Endothelial cell of umbilical vein (primary cell): ENCODE measurements at regions of chr1 and their contacts with region 1.

Region 1: GRCh38 chr1:50929376-50929958 is 30.6 kb downstream of the FAF1 start:
- DNase-seq: peak; percentile 52
- H3K4me3 ChIP-seq: no peak overlapping the region
- H3K27ac ChIP-seq: no peak overlapping the region
- H3K4me1 ChIP-seq: no peaks in the 10 kb centered on the region
- H3K27me3 ChIP-seq: no peaks in the 10 kb centered on the region
- CTCF ChIP-seq: peak; percentile 23 to 36
- POLR2A ChIP-seq: no peak

Region 2: DNA sequence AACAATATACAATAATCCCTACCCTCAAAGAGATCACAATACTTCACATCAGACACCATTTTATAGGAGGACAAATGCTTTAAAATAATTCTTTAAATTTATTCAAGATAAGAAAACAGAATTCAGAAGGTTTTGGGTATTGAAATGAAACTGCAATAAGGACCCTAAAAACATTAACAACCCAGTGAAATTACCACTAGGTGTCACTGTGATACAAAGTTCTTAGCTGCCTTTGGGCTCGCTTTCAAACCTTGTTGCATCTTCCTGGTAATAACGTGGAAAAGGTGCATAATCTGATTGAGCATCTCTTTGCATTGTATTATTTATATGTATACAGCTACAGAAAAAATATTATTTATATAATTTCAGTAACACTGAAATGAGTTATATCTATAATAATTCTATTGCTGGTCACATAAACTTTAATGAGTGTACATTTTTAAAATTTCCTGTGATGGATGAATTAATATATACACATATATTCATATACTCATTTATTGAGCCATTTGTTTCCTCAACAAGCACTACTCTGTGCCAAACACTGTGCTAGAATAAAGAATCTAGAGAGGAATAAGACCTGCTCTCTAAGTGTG is 154.6 kb before region 1 on chr1:
- CTCF ChIA-PET with region 1: interaction called, 61 read pairs
- POLR2A ChIA-PET with region 1: no interaction called
- dilution Hi-C with region 1: no loop called
- intact Hi-C with region 1: loop called (anchors 1 kb)
- DNase-seq: peak; percentile 67
- H3K4me3 ChIP-seq: no peak overlapping the region
- H3K27ac ChIP-seq: no peak overlapping the region
- H3K4me1 ChIP-seq: no peaks in the 10 kb centered on the region
- H3K27me3 ChIP-seq: no peaks in the 10 kb centered on the region
- CTCF ChIP-seq: peak; percentile 38 to 50
- POLR2A ChIP-seq: no peak

Region 3: GRCh38 chr1:50917138-50918137 is 12.0 kb before region 1 on chr1:
- CTCF ChIA-PET with region 1: interaction called, 20 read pairs
- POLR2A ChIA-PET with region 1: no interaction called
- dilution Hi-C with region 1: no loop called
- intact Hi-C with region 1: no loop called
- DNase-seq: no peak
- H3K4me3 ChIP-seq: no peak overlapping the region
- H3K27ac ChIP-seq: no peak overlapping the region
- H3K4me1 ChIP-seq: no peaks in the 10 kb centered on the region
- H3K27me3 ChIP-seq: no peaks in the 10 kb centered on the region
- CTCF ChIP-seq: no peak
- POLR2A ChIP-seq: no peak

Region 4: DNA sequence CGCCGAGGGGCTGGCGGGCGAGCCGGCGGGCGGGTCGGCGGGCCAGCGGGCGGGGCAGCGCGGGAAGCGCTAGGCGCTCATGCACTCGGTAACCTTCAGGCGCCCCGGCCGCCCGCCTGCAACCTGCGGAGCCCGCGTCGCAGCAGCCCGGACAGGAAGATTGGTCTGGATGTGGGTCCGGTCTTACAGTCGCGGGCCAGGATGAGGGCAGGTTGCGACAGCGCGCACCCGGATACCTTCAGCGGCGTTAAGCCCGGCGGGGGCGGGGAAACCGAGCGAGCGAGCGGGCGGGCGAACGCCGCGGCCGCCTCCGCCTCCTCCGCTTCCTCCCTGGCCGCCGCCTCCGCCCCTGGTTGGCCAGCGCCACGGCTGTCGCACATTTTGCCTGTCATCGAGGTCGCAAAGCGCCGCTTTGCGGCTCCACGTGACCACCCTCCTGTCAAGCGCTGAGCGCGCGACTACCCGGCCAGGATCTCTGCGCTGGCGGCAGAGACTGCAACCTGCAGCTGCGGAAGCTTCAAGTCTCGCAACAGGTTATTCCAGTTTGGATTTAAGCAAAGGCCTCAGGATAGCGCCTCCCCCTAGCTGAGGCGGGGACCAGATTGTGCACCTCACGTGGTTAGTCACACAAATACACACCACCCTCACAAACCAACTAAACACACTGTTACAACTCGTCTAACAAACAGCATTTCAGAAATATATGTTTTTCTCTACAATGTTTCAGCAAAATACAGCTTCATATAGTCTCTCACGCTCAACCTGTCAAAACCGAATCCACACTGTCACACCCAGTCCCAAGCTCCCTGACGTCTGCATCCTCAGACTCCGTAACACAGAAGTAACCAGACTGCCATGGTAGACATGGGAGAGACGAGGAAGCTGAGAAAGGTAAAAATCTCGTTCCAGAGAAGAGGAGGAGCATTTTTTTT is 30.7 kb after region 1 on chr1 and contains the start of gene FAF1:
- CTCF ChIA-PET with region 1: interaction called, 17 read pairs
- POLR2A ChIA-PET with region 1: no interaction called
- dilution Hi-C with region 1: no loop called
- intact Hi-C with region 1: no loop called
- DNase-seq: peak; percentile 98
- H3K4me3 ChIP-seq: peak within 1 kb of the TSS; percentile 73 to 97 (median 95)
- H3K27ac ChIP-seq: peak within 1 kb of the TSS; percentile 58
- H3K4me1 ChIP-seq: peaks cover 9% of the 10 kb centered on the region
- H3K27me3 ChIP-seq: no peaks in the 10 kb centered on the region
- CTCF ChIP-seq: peak in 1 of 2 donors; percentile 13
- POLR2A ChIP-seq: peak; percentile 93
- total RNA-seq, gene FAF1: 55.3 and 57.6 TPM in 2 replicates

Region 5: DNA sequence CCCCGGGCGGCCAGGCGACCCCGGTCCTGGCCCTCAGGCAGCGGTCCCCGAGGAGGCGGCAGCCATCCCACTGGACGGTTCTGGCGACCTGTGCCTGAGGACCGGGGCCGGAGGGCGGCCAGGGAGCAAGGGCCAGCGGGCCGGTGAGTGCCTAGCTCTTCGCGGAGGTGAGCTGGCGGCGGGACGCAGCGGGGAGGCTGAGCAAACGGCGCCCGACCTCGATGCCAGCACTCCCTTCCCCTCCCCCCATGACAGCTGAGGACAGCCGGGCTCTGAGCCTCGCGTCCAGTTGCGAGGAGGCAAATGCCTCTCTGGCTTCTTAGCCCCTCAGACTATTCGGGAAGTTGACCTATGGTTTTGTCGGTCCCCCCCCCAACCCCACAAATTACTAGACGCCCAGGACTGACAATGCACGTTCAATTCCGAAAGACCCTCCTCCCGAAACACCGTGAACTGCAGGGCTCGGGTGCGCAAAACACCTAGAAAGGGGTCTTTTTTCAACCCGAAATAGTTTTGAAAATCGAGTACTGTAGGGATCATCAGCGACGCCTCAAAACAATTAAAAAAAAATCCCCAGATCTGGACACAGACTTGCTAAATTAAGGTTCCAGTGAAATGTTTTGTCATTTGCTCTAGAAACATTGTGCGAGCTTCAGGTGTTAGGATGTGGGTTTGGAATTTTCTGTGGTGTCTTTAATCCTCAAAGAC is 48.8 kb after region 1 on chr1:
- CTCF ChIA-PET with region 1: interaction called, 26 read pairs
- POLR2A ChIA-PET with region 1: no interaction called
- dilution Hi-C with region 1: no loop called
- intact Hi-C with region 1: no loop called
- DNase-seq: peak; percentile 50
- H3K4me3 ChIP-seq: peak overlapping the region; percentile 60 to 90 (median 61)
- H3K27ac ChIP-seq: peak overlapping the region; percentile 37
- H3K4me1 ChIP-seq: peaks cover 13% of the 10 kb centered on the region
- H3K27me3 ChIP-seq: no peaks in the 10 kb centered on the region
- CTCF ChIP-seq: no peak
- POLR2A ChIP-seq: no peak

Region 6: GRCh38 chr1:51058858-51059257 is 129.4 kb after region 1 on chr1:
- CTCF ChIA-PET with region 1: interaction called, 17 read pairs
- POLR2A ChIA-PET with region 1: no interaction called
- dilution Hi-C with region 1: no loop called
- intact Hi-C with region 1: no loop called
- DNase-seq: peak; percentile 9
- H3K4me3 ChIP-seq: no peak overlapping the region
- H3K27ac ChIP-seq: no peak overlapping the region
- H3K4me1 ChIP-seq: peaks cover 17% of the 10 kb centered on the region
- H3K27me3 ChIP-seq: peaks cover 0 to 2% of the 10 kb centered on the region in 2 experiments
- CTCF ChIP-seq: peak; percentile 21 to 55
- POLR2A ChIP-seq: no peak

Region 7: DNA sequence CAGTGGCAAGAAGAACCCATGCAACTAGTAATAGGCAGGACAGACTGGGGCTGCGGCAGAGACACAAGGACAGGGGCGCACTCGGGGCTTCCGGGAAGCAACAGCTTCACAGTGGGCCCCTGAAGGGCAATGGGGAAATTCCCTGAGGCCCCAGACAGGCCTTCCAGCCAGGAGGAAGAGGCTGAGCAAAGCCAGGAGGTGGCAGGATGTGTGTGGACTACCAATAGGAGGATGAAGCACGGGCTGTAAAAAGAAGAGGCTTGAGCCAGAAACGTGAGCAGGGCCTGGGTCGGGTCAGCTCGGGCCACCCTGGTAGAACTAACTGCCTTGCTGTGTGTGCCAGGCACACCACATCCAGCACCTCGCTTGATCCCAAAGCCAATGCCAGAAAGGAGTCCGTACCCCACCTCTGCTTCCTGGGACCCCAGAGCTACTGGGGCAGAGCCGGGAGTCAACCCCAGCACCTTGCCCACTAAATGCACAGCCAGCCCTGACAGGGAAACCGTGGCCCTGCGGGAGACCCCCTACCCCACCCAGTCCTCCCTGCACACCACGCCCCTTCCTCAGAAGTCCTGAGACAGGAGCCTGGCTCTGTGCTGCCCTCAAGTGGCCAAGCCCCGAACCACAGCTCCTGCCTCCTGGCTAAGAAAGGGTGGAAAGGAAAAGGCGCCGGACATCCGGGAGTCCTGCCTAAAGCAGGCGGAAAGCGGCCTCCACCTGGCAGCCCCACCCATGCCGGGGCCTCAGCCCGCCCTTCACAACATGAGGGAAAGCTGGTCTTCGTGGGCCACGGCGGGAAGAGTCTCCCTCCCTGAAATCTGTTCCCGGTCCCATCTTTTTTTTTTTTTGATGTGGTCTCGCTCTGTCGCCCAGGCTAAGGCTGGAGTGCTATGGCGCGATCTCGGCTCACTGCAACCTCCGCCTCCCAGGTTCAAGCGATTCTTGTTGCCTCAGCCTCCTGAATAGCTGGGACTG is 367.2 kb after region 1 on chr1:
- CTCF ChIA-PET with region 1: interaction called, 7 read pairs
- POLR2A ChIA-PET with region 1: no interaction called
- dilution Hi-C with region 1: no loop called
- intact Hi-C with region 1: loop called (anchors 1 kb)
- DNase-seq: peak; percentile 80
- H3K4me3 ChIP-seq: peak overlapping the region in 2 of 3 experiments; percentile 2 to 34
- H3K27ac ChIP-seq: peak overlapping the region; percentile 39
- H3K4me1 ChIP-seq: peaks cover 9% of the 10 kb centered on the region
- H3K27me3 ChIP-seq: no peaks in the 10 kb centered on the region
- CTCF ChIP-seq: peak; percentile 93 to 96
- POLR2A ChIP-seq: peak; percentile 32